Dendritic cell treated with granulocyte-macrophage colony-stimulating factor and Interleukin-4, amounts not matched to agents 40 ng/mL and 50 ng/mL, for 4 days (primary cell): ENCODE measurements at regions of chr7 and their contacts with region 1.

Region 1: DNA sequence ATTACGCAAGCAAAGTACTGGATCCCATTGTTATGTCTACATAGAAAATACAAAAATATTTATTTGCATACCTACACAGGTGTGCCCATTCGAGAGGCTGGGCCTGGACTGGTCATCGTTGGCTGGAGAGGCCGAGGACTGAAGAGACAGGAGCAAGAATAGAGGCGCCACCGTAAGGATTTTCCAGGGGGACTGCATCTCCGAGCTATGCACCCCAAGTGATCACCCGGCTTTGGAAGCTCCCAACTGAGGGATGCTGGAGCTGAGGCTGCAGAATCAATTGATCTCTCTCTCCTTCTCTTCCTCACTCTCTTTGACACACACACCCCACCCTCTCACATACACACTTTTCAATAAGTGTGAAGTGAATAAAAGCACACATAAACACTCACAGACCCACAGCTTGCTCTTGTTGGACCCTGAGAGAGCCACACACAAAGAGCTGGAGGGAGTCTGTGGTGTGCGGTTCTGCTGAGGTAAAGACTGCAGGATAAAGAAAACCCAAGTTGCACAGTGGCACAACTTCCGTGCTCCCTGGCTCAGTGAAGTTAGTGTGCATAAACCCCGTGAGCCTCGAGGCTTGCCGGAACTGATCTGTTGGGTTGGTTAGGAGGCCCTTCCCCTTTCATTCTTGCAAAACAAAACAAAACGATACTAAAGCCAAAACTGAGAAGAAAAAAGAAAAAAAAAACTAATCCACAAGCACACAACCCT is at the start of gene AOAH:
- H3K4me3 Mint-ChIP-seq: peak within 1 kb of the TSS; percentile 92
- H3K27ac Mint-ChIP-seq: peak within 1 kb of the TSS; percentile 84
- H3K4me1 Mint-ChIP-seq: peaks cover 81% of the 10 kb centered on the region
- H3K27me3 Mint-ChIP-seq: no peaks in the 10 kb centered on the region

Region 2: GRCh38 chr7:36514289-36515243 is 209.5 kb before region 1 on chr7:
- intact Hi-C with region 1: no loop called
- H3K4me3 Mint-ChIP-seq: no peak overlapping the region
- H3K27ac Mint-ChIP-seq: peak overlapping the region; percentile 29
- H3K4me1 Mint-ChIP-seq: peaks cover 30% of the 10 kb centered on the region
- H3K27me3 Mint-ChIP-seq: no peaks in the 10 kb centered on the region

Region 3: DNA sequence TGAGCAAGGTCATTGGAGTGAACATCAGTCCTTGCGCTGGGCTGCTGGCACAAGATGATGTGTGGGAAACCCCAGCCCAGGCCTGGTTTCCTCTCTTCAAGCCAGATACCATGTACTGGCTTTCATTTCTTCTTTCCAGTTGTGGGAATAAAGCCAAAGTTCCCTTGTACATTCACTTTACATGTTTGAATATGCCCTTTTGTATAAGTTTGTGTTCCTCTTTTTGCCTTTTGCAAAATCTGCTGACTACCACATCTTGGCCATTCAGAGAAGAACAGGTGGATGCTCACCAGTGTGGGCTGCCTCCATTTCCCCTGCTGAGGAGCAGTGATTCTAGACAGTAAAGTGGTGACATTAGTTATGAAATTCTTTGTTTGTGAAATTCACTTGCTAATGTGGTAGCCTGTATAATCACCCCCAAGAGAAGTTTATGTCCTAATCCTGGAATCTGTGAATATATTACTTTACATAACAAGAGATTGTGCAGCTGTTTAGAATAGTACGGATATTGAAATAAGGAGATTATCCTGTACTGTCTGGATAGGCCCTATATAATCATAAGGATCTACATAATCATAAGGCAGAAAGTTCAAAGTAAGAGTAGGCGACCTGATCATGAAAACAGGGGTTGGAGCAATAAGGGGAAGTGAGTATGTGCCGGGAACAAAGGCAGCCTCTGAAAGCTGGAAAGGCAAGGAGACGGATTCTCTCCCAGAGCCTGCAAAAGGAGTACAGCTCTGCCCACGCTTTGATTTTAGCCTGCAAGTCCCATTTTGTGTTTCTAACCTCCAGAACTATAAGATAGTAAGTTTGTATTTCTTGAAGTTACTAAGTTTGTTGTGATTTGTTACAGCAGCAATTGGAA is 19.0 kb after region 1 on chr7:
- intact Hi-C with region 1: no loop called
- H3K4me3 Mint-ChIP-seq: no peak overlapping the region
- H3K27ac Mint-ChIP-seq: peak overlapping the region; percentile 82
- H3K4me1 Mint-ChIP-seq: peaks cover 79% of the 10 kb centered on the region
- H3K27me3 Mint-ChIP-seq: no peaks in the 10 kb centered on the region

Region 4: DNA sequence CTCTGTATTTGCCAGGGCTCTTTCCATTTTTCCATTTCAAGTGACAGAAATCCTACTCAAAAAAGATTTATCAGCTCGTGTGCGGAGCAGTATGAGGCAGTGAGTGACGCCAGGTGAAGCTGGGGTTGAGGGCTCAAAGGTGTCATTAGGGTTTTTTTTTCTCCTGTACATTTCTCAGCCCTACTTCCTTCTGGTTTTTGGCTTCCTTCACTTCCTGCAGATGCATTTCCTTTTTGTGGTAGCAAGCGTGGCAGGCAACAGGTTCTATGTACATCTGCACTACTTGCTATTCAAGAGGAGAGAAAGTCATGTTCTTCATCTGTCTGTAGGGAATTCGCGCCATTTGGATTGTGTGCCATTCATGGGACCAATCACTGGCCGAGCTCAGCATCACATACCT is 53.0 kb after region 1 on chr7:
- intact Hi-C with region 1: loop called (anchors 10 kb)
- H3K4me3 Mint-ChIP-seq: no peak overlapping the region
- H3K27ac Mint-ChIP-seq: peak overlapping the region; percentile 40
- H3K4me1 Mint-ChIP-seq: peaks cover 73% of the 10 kb centered on the region
- H3K27me3 Mint-ChIP-seq: no peaks in the 10 kb centered on the region

Region 5: DNA sequence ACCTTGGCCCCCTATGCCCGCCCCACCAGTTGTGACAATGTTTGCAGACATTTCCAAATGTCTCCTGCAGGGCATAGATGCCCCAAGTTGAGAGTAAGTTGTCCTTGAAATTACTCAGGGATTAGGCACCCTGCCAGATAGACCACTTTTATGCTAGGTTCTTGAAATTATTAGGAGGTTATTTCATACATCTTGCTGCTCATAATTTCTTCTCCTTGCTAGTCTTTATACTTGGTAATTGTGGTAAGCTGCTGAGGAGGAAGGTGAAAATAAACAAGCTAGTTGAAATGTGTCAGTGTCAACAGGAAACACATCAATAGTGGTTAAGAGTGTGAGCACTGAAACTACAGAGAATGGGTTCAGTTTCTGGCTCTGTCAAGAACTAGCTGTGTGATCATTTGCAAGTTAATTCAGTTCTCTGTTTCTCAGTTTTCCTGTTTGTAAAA is 63.8 kb after region 1 on chr7:
- intact Hi-C with region 1: no loop called
- H3K4me3 Mint-ChIP-seq: no peak overlapping the region
- H3K27ac Mint-ChIP-seq: no peak overlapping the region
- H3K4me1 Mint-ChIP-seq: peaks cover 22% of the 10 kb centered on the region
- H3K27me3 Mint-ChIP-seq: peaks cover 2% of the 10 kb centered on the region

Region 6: DNA sequence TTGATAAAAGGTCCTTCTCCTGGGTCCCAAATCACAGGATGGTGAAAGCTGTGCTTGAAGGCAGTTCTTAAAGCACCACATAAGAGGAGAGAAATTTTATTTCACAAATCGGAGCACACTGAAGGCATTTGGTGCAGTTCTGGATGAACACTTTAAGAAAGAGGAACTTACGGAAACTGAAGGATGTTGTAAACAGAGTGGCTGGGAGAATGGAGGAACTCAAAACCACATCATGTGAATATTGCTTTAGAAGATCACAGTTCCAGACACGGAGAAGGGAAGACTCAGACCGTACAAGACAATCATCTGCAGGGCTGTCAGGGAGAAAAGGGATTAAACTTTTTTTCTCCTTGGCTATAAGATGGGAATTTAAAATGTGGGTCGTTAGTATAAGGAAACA is 950.4 kb after region 1 on chr7:
- intact Hi-C with region 1: no loop called
- H3K4me3 Mint-ChIP-seq: peak overlapping the region; percentile 44
- H3K27ac Mint-ChIP-seq: peak overlapping the region; percentile 83
- H3K4me1 Mint-ChIP-seq: peaks cover 63% of the 10 kb centered on the region
- H3K27me3 Mint-ChIP-seq: no peaks in the 10 kb centered on the region